Breast epithelium (tissue), 4 donors: ENCODE measurements at regions of chr5 and their contacts with region 1.

Region 1: DNA sequence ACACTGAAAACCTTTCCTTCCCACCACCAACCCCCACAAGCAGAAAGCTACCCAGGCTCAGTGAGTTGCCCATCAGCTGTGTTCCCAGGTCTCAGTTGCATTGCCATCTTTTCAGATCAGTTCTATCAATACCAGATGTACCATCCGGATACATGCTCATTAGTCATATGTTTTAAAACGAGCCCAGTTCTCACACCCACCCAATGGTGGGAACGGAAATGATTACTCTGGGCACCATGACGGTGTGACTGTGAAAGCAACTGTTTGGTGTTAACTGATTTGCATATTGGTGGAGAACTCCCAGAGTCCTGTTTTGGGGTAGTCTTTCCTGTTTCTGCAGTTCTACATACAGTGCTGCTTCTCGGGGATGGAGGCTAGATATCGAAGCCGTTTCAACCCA is 212.3 kb downstream of the TRIM36 start:
- DNase-seq: no peak
- H3K4me3 ChIP-seq: no peak overlapping the region
- H3K27ac ChIP-seq: no peak overlapping the region
- H3K4me1 ChIP-seq: no peaks in the 10 kb centered on the region
- H3K27me3 ChIP-seq: no peaks in the 10 kb centered on the region
- CTCF ChIP-seq: no peak
- POLR2A ChIP-seq: no peak

Region 2: GRCh38 chr5:114789773-114790402 is 167.5 kb before region 1 on chr5:
- intact Hi-C with region 1: no loop called
- DNase-seq: no peak
- H3K4me3 ChIP-seq: no peak overlapping the region
- H3K27ac ChIP-seq: no peak overlapping the region
- H3K4me1 ChIP-seq: no peaks in the 10 kb centered on the region
- H3K27me3 ChIP-seq: no peaks in the 10 kb centered on the region
- CTCF ChIP-seq: no peak
- POLR2A ChIP-seq: no peak

Region 3: DNA sequence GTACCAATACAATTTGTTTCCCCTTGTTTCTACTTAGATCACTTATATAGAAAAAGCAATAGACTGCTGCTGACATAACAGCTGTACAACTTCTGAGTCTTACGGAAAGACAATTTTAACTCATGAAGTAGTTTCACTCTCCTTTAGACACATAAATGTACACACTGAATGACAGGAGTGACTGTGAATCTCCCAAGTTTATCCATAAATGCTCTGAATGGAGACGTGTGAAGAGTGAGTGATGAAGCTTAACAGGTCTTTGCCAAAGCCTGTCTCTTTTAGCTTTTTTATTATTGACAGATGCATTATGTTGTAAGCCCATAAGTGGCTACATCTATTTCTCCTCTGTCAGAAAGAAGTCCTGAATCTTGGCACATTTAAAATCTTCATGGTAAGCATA is 53.6 kb before region 1 on chr5:
- intact Hi-C with region 1: loop called (anchors 10 kb)
- DNase-seq: no peak
- H3K4me3 ChIP-seq: no peak overlapping the region
- H3K27ac ChIP-seq: no peak overlapping the region
- H3K4me1 ChIP-seq: no peaks in the 10 kb centered on the region
- H3K27me3 ChIP-seq: no peaks in the 10 kb centered on the region
- CTCF ChIP-seq: no peak
- POLR2A ChIP-seq: no peak

Region 4: GRCh38 chr5:114940709-114941108 is 16.7 kb before region 1 on chr5:
- intact Hi-C with region 1: no loop called
- DNase-seq: no peak
- H3K4me3 ChIP-seq: no peak overlapping the region
- H3K27ac ChIP-seq: no peak overlapping the region
- H3K4me1 ChIP-seq: no peaks in the 10 kb centered on the region
- H3K27me3 ChIP-seq: no peaks in the 10 kb centered on the region
- CTCF ChIP-seq: no peak
- POLR2A ChIP-seq: no peak

Region 5: GRCh38 chr5:116225281-116225680 is 1267.9 kb after region 1 on chr5:
- intact Hi-C with region 1: no loop called
- DNase-seq: no peak
- H3K4me3 ChIP-seq: no peak overlapping the region
- H3K27ac ChIP-seq: no peak overlapping the region
- H3K4me1 ChIP-seq: no peaks in the 10 kb centered on the region
- H3K27me3 ChIP-seq: no peaks in the 10 kb centered on the region
- CTCF ChIP-seq: no peak
- POLR2A ChIP-seq: no peak